ENCODE measurements at regions of chr2 and their contacts with region 1.

Region 1: DNA sequence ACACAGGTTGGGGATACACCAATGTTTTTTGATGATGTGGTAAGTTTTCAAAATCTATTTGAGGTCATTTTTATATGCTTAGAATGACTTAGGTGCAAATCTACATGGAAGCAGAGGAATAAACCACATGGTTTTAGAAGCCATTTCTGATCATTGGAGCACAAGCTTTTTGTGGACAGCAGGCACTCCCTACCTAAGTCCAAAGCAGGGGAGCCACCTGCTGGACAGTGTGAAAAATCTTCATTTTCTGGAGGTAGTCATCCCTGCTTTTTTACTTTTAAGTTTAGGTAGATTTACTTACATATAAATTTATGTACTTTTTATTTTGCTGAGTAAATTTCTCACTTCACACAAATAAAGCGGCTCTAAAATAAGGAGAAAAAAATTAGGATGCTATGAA is 323.2 kb downstream of the PLCL1 start:
- DNase-seq: peak; percentile 32
- ATAC-seq: peak; percentile 94
- H3K4me3 ChIP-seq: no peak overlapping the region
- H3K27ac ChIP-seq: no peak overlapping the region
- H3K4me1 ChIP-seq: no peaks in the 10 kb centered on the region
- H3K27me3 ChIP-seq: no peaks in the 10 kb centered on the region; a peak in 1 of 4 replicates
- CTCF ChIP-seq: peak; percentile 56 to 88 (median 69)
- EP300 ChIP-seq: no peak
- POLR2A ChIP-seq: no peak
- RAD21 ChIP-seq: peak; percentile 95

Region 2: DNA sequence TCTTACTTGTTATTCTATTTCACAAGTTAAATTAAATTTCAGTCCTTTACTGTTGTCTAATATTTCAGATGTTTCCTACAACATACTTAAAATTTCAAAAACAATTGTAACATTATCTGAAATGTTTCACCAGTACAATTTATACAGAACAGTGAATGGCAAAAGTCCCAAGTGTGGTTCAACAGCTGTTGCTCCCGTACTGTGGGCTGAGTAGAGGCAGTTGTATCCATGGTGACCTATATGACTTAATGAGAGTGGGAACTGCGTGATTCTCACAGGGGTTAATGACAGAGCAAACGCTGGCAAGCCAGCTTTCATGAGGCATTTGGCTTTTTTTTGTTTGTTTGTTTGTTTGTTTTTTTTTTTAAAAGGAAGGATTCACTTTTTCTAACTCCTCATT is 328.6 kb before region 1 on chr2:
- CTCF ChIA-PET with region 1: interaction called, 109 read pairs
- POLR2A ChIA-PET with region 1: no interaction called
- RAD21 ChIA-PET with region 1: interaction called, 34 read pairs
- SMC1A ChIA-PET with region 1: interaction called, 120 read pairs
- in situ Hi-C with region 1: loop called (anchors 5 kb)
- intact Hi-C with region 1: loop called (anchors 1 kb)
- DNase-seq: no peak
- ATAC-seq: peak; percentile 49
- H3K4me3 ChIP-seq: no peak overlapping the region
- H3K27ac ChIP-seq: no peak overlapping the region
- H3K4me1 ChIP-seq: no peaks in the 10 kb centered on the region
- H3K27me3 ChIP-seq: peaks cover 0 to 2% of the 10 kb centered on the region in 2 experiments; a peak in 2 of 4 replicates
- CTCF ChIP-seq: no peak
- EP300 ChIP-seq: no peak
- POLR2A ChIP-seq: no peak
- RAD21 ChIP-seq: no peak

Region 3: DNA sequence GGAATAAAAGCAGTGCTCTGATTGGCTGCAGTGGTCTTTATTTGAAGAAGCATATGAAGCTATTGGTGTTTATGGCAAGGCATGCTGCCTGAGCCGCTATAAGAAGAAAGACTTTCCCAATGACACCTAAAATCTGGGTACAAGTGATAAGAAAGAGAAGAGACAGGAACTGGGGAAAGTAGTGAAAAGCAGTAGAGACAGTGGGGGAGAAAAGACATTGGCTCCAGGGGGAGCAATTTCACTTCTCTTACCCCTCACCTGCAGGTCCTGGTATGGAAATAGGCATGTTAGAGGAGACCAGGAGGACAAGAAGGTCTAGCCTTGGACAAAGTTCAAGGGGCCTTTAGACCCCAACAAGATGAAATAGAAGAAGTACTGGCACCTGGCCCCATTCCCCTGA is 276.2 kb before region 1 on chr2:
- CTCF ChIA-PET with region 1: interaction called, 128 read pairs
- POLR2A ChIA-PET with region 1: no interaction called
- RAD21 ChIA-PET with region 1: interaction called, 94 read pairs
- SMC1A ChIA-PET with region 1: interaction called, 170 read pairs
- in situ Hi-C with region 1: no loop called
- intact Hi-C with region 1: loop called (anchors 1 kb)
- DNase-seq: no peak
- ATAC-seq: peak; percentile 77
- H3K4me3 ChIP-seq: no peak overlapping the region
- H3K27ac ChIP-seq: no peak overlapping the region
- H3K4me1 ChIP-seq: no peaks in the 10 kb centered on the region
- H3K27me3 ChIP-seq: no peaks in the 10 kb centered on the region
- CTCF ChIP-seq: peak; percentile 28 to 57 (median 33); a peak in 4 of 6 replicates
- EP300 ChIP-seq: no peak
- POLR2A ChIP-seq: no peak
- RAD21 ChIP-seq: peak; percentile 72

Region 4: GRCh38 chr2:197992482-197993133 is 135.0 kb before region 1 on chr2:
- CTCF ChIA-PET with region 1: interaction called, 6 read pairs
- POLR2A ChIA-PET with region 1: no interaction called
- RAD21 ChIA-PET with region 1: interaction called, 14 read pairs
- SMC1A ChIA-PET with region 1: interaction called, 5 read pairs
- in situ Hi-C with region 1: no loop called
- intact Hi-C with region 1: loop called (anchors 5 kb)
- DNase-seq: no peak
- ATAC-seq: peak; percentile 98
- H3K4me3 ChIP-seq: no peak overlapping the region
- H3K27ac ChIP-seq: peak overlapping the region; percentile 43; the same call in 1 of the 2 replicates
- H3K4me1 ChIP-seq: peaks cover 16% of the 10 kb centered on the region
- H3K27me3 ChIP-seq: no peaks in the 10 kb centered on the region
- CTCF ChIP-seq: no peak
- EP300 ChIP-seq: 0 out of 4 replicates have a peak, but pooled peaks of 1 of the 2 experiments have one; percentile 9
- POLR2A ChIP-seq: no peak
- RAD21 ChIP-seq: no peak

Region 5: DNA sequence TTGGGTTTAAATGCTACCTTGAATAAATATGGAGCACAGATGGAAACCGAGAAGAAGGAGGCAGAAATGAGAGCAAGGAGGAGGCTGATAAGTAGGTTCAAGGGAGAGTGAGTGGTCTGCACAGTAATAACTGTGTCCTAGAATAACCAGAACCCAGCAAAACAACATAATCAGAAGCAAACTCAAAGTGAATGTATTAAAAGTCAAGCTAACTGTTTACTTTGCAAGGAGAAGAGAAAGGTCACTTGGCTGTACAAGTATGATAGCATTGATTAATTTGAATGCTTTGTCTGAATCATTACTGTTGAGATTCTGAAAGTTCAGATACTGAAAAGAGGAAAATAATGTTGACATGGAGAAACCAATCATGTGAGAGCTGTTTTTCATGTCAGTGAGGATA is 64.4 kb before region 1 on chr2:
- CTCF ChIA-PET with region 1: interaction called, 28 read pairs
- POLR2A ChIA-PET with region 1: no interaction called
- RAD21 ChIA-PET with region 1: interaction called, 4 read pairs
- SMC1A ChIA-PET with region 1: interaction called, 13 read pairs
- in situ Hi-C with region 1: no loop called
- intact Hi-C with region 1: no loop called
- DNase-seq: no peak
- ATAC-seq: peak; percentile 57
- H3K4me3 ChIP-seq: no peak overlapping the region
- H3K27ac ChIP-seq: no peak overlapping the region
- H3K4me1 ChIP-seq: no peaks in the 10 kb centered on the region
- H3K27me3 ChIP-seq: no peaks in the 10 kb centered on the region; a peak in 1 of 4 replicates
- CTCF ChIP-seq: no peak
- EP300 ChIP-seq: no peak
- POLR2A ChIP-seq: no peak
- RAD21 ChIP-seq: no peak

Region 6: DNA sequence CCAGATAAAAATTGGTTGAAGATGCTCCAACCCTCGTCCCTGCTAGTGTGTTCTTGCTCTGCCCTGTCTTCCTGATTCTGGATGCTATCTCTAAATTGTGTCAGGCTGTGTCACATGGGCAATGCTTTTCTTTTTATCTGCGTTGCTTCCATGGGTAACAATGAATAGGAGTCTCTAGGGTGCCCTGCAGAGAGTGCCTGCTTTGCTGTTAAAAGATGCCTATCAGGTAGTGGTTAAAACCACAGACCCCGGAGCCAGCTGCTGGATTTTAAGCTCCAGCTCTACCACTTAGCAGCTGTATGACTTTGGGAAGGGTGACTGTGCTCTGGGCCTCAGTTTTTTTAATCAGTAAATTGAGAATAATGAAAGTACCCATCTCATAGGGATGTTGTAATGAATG is 17.0 kb after region 1 on chr2:
- CTCF ChIA-PET with region 1: interaction called, 10 read pairs
- POLR2A ChIA-PET with region 1: no interaction called
- RAD21 ChIA-PET with region 1: interaction called, 3 read pairs
- SMC1A ChIA-PET with region 1: interaction called, 5 read pairs
- in situ Hi-C with region 1: no loop called
- intact Hi-C with region 1: no loop called
- DNase-seq: no peak
- ATAC-seq: no peak
- H3K4me3 ChIP-seq: no peak overlapping the region
- H3K27ac ChIP-seq: no peak overlapping the region
- H3K4me1 ChIP-seq: no peaks in the 10 kb centered on the region
- H3K27me3 ChIP-seq: no peaks in the 10 kb centered on the region; a peak in 1 of 4 replicates
- CTCF ChIP-seq: no peak
- EP300 ChIP-seq: no peak
- POLR2A ChIP-seq: no peak
- RAD21 ChIP-seq: no peak

Measured in GM12878 (cell line).